ENCODE measurements at regions of chr17 and their contacts with region 1.

Region 1: DNA sequence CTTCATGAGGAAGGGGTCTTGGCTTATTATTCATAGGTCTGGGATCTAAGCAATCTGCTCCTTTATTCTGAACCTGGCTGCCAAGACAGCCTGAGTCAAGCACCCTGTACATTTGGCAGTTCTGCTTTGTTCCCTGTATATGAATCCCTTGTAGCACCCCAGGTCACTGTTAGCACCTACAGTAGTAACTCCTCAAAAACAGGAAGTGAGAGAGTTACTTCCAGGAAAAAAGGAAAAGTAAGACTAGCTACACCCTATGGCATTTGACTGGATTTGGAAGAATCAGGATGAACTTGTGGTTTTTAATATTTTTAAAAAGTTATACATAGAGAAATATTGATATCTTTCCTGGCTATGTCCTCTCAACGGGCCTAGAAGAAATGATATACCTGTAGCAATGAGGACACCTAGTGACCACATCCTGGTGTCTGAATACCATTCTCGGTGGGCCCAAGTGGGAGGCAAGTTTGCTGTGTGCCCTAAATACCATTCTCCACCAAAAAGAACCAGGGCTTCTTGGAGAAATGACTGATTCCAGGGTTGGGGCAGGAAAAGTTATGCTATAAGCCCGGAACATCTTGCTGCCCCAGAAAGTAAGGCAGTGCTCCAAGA is 9.9 kb downstream of the ANKRD40 start:
- DNase-seq: no peak
- H3K4me3 ChIP-seq: no peak overlapping the region
- H3K27ac ChIP-seq: no peak overlapping the region
- H3K27me3 ChIP-seq: no peaks in the 10 kb centered on the region
- CTCF ChIP-seq: no peak

Region 2: GRCh38 chr17:50626037-50626574 is 71.7 kb before region 1 on chr17:
- CTCF ChIA-PET with region 1: interaction called, 18 read pairs
- POLR2A ChIA-PET with region 1: interaction called, 4 read pairs
- DNase-seq: peak; percentile 37
- H3K4me3 ChIP-seq: no peak overlapping the region
- H3K27ac ChIP-seq: no peak overlapping the region
- H3K27me3 ChIP-seq: peaks cover 6% of the 10 kb centered on the region
- CTCF ChIP-seq: peak; percentile 76

Region 3: GRCh38 chr17:50668838-50669581 is 28.8 kb before region 1 on chr17:
- CTCF ChIA-PET with region 1: interaction called, 11 read pairs
- POLR2A ChIA-PET with region 1: no interaction called
- DNase-seq: no peak
- H3K4me3 ChIP-seq: no peak overlapping the region
- H3K27ac ChIP-seq: no peak overlapping the region
- H3K27me3 ChIP-seq: no peaks in the 10 kb centered on the region
- CTCF ChIP-seq: no peak

Region 4: GRCh38 chr17:50783193-50783660 is 85.5 kb after region 1 on chr17:
- CTCF ChIA-PET with region 1: no interaction called
- POLR2A ChIA-PET with region 1: no interaction called
- DNase-seq: peak; percentile 61
- H3K4me3 ChIP-seq: no peak overlapping the region
- H3K27ac ChIP-seq: no peak overlapping the region
- H3K27me3 ChIP-seq: peaks cover 3% of the 10 kb centered on the region
- CTCF ChIP-seq: peak; percentile 96

Measured in AG04450 (cell line).